ENCODE measurements at regions of chr11 and their contacts with region 1.

Region 1: GRCh38 chr11:1335811-1336761 is 26.7 kb upstream of the TOLLIP start:
- DNase-seq: peak; percentile 53 to 80 (median 68)
- ATAC-seq: peak; percentile 65 to 78 (median 75)
- H3K4me3 ChIP-seq: peak overlapping the region; percentile 24 to 59 (median 52)
- H3K27ac ChIP-seq: peak overlapping the region in 10 of 12 donors; percentile 18 to 80 (median 48)
- H3K4me1 ChIP-seq: peaks cover 4 to 25% (median 12%) of the 10 kb centered on the region in 12 donors
- H3K27me3 ChIP-seq: no peaks in the 10 kb centered on the region
- CTCF ChIP-seq: no peak
- POLR2A ChIP-seq: no peak

Region 2: DNA sequence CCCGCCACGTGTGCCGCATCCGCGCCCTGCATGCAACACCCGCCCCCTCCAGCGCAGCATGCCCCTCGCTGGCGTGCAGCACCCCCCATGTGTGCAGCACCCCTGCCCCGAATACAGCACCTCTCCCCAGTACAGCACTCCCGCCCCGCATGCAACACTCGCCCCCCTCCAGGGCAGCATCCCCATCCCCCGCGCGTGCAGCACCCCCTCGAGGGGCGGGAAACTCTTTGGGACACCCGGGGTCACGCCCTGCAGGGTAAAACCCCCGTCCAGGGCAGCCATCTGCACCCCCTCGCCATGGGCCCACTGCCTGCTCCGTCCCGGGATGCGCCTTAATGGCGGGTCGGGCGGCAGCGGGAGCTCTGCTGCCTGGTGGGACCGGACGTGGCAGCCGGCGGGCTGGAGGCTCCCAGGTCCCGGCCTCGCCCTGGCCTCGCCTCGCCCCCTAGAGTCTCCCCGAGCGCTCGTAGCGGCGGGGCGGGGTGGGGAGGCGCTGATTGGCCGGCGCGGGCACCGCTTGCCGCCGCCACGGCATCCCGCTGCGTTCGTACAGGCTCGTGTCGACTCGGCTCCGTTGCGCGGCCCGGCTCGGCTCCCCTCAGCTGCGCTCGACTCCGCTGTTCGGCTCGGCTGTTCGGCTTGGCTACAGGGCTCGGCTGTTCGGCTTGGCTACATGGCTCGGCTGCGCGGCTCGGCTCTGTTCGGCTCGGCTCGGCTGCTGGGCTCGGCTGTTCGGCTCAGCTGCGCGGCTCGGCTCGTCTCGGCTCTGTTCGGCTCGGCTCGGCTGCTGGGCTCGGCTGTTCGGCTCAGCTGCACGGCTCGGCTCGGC is 53.2 kb after region 1 on chr11:
- intact Hi-C with region 1: loop called in 2 of 10 experiments (anchors 5 kb)
- DNase-seq: peak; percentile 95 to 98 (median 97)
- ATAC-seq: peak; percentile 99
- H3K4me3 ChIP-seq: peak overlapping the region; percentile 34 to 76 (median 58)
- H3K27ac ChIP-seq: peak overlapping the region in 10 of 12 donors; percentile 27 to 74 (median 53)
- H3K4me1 ChIP-seq: peaks cover 0 to 25% (median 9%) of the 10 kb centered on the region in 12 donors
- H3K27me3 ChIP-seq: peaks cover 9 to 47% (median 22%) of the 10 kb centered on the region in 9 donors
- CTCF ChIP-seq: peak in 5 of 12 donors; percentile 12 to 44 (median 32)
- POLR2A ChIP-seq: no peak